Body of pancreas (tissue), 4 donors: ENCODE measurements at regions of chr15 and their contacts with region 1.

Region 1: GRCh38 chr15:76196269-76197231 is 114.7 kb downstream of the ETFA start:
- DNase-seq: peak; percentile 63 to 80 (median 76)
- ATAC-seq: peak; percentile 86
- H3K4me3 ChIP-seq: no peak overlapping the region
- H3K27ac ChIP-seq: peak overlapping the region; percentile 14 to 69 (median 51)
- H3K4me1 ChIP-seq: peaks cover 17% of the 10 kb centered on the region
- H3K27me3 ChIP-seq: no peaks in the 10 kb centered on the region
- CTCF ChIP-seq: no peak
- POLR2A ChIP-seq: no peak

Region 2: GRCh38 chr15:76330080-76330680 is 133.6 kb after region 1 on chr15:
- intact Hi-C with region 1: loop called (anchors 5 kb)
- DNase-seq: peak; percentile 67 to 76 (median 70)
- ATAC-seq: peak; percentile 90
- H3K4me3 ChIP-seq: no peak overlapping the region
- H3K27ac ChIP-seq: no peak overlapping the region
- H3K4me1 ChIP-seq: no peaks in the 10 kb centered on the region
- H3K27me3 ChIP-seq: peaks cover 0 to 5% of the 10 kb centered on the region in 2 donors
- CTCF ChIP-seq: peak; percentile 26 to 65 (median 56)
- POLR2A ChIP-seq: no peak

Region 3: GRCh38 chr15:76376029-76376428 is 179.5 kb after region 1 on chr15:
- intact Hi-C with region 1: no loop called
- DNase-seq: no peak
- ATAC-seq: no peak
- H3K4me3 ChIP-seq: no peak overlapping the region
- H3K27ac ChIP-seq: no peak overlapping the region
- H3K4me1 ChIP-seq: no peaks in the 10 kb centered on the region
- H3K27me3 ChIP-seq: no peaks in the 10 kb centered on the region
- CTCF ChIP-seq: no peak
- POLR2A ChIP-seq: no peak